Lower leg skin (tissue), 4 donors: ENCODE measurements at regions of chr15 and their contacts with region 1.

Region 1: DNA sequence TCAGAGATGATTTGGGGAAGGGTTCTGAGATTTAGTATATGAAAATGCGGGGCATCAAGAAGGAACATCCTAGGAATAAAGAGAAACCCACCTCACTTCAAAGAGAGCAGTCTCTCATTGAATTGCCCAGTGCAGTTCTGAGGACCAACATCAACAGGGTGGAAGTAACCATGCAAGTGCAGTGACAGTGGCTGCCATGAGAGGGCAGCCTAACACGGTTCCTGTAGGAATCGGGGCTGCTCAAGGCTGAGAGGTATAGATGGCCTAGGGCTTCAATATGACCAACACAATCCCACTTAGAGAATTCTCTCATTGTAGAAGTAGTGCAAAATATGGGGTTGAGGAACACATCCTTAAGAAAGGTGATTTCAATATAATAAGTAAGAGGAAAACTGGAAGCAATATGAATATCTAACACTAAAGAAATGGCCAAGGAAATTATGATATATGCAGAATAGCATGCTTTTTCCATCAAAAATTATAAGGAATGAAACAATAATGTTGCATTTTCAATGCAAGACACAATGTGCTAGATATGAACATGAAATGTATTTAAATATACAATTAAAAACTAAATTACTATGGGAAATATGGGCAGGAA is 51.1 kb upstream of the ARRDC4 start:
- DNase-seq: peak; percentile 54 to 88
- H3K4me3 ChIP-seq: no peak overlapping the region
- CTCF ChIP-seq: peak in 1 of 3 donors; percentile 29
- POLR2A ChIP-seq: no peak

Region 2: DNA sequence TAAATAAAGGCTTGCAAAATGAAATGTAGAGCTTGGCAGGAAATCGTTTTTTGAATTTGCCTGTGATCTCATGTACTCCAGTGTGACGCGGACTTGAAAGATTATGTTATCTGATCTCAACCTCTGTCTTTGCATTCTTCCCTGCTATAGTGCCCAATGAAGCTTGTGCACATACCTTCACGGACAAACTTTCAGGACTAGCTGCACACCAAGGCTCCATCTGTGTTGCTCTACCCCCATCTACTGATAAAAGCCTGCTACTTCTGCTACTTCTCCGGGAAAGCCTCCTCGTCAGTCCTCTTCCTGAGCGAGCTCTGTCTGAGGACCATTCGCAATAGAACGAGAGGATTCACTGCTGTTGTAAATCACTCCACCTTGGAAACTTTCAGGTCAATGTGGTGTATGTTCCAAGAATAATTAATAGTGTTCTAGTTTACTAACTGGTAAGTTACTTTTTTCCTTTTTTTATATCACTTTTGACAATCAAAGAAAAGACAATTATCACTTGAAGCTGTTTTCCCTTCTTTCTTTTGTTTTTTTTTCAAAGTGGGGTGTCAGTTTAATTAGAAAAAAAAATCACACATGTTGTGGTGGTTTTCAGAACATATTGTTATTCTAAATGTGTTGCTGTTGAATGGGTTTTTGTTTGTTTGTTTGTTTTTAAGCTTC is 268.7 kb after region 1 on chr15:
- intact Hi-C with region 1: loop called (anchors 5 kb)
- DNase-seq: peak in 1 of 2 donors; percentile 29
- H3K4me3 ChIP-seq: no peak overlapping the region
- CTCF ChIP-seq: no peak
- POLR2A ChIP-seq: no peak

Region 3: GRCh38 chr15:98401029-98401428 is 491.6 kb after region 1 on chr15:
- intact Hi-C with region 1: no loop called
- DNase-seq: peak; percentile 40 to 50
- H3K4me3 ChIP-seq: no peak overlapping the region
- CTCF ChIP-seq: no peak
- POLR2A ChIP-seq: no peak

Region 4: DNA sequence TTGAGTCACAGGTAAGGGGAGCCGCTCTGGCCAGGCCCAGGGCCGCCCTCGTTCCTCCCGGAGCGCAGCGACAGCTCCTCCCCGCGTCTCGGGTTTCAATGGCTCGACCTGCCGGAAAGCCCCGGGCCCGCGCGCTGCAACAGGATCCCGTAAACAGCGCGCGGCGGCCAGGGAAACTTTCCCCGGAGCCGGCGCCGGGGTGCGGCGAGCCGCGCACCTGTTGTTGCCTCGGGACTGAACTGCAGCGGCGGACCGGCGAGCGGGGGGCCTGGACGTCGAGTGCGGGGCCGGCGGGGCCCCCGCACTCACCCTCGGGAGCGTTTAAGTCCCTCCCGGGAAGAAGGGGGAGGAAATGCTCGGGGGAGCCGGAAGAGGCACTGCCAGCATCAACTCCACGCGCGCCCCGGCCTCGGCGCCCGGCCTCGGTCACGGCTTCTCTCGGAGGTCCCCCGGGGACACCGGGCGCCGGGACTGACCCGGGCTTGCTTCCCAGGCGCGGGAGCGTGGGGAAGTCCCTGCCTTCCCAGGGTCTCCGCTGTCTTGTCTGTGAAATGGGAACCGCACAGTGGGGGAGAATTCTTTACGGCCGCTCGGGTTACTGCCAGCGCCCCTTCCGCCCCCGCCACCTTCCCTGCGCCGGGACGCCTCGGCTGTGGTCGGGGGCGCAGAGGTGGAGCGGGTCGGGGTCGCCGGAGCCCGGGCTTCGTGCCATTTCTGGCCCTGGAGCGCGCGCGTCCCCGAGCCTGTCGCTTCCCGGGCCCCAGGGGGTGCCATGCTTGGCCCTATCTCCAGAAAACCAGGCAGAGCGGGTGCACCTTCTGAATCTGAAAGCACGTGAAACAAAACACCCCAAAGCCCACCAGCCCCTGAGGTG is 1105.6 kb after region 1 on chr15:
- intact Hi-C with region 1: no loop called
- DNase-seq: peak; percentile 29 to 90
- H3K4me3 ChIP-seq: peak overlapping the region; percentile 36
- CTCF ChIP-seq: no peak
- POLR2A ChIP-seq: no peak